Thyroid gland (tissue), 4 donors: ENCODE measurements at regions of chr1 and their contacts with region 1.

Region 1: GRCh38 chr1:112881742-112882127 is 74.3 kb downstream of the SLC16A1 start:
- DNase-seq: no peak
- H3K4me3 ChIP-seq: no peak overlapping the region
- H3K27ac ChIP-seq: no peak overlapping the region
- H3K4me1 ChIP-seq: no peaks in the 10 kb centered on the region
- H3K27me3 ChIP-seq: no peaks in the 10 kb centered on the region
- CTCF ChIP-seq: no peak
- POLR2A ChIP-seq: no peak

Region 2: DNA sequence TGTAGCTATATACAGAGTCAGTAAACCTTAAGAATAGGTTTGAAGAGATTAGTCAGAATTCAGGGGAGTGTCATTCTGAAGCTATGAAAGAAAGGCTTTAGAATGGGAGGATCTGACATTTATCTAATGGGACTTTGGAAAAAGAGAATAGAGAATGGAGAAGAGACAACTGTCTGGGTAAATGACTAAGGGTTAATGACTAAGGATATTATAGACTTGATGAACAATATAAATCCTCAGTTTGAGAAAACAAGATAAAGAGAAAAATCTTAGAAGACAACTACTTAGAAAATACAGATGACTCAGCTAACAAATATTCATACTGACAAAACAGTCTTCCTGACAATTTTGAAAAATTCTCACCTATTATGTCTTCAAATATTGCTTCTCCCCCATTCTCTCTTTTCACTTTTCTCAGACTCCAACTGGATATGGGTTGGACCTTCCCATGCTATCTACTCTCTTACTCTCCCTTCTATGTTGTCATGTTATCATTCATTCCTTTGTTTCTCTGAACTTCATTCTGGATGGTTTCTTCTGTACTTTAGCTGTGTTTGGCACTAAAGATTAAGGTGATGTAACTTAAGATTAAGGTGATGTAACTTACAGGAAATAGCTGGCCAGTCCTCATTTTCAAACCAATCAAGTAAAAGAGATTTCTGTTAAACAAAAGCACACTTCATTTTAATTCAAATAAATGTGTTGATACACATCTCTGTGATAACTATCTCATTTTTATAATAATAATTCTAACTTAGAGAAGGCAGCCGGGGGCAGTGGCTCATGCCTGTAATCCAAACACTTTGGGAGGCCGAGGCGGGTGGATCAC is 53.9 kb after region 1 on chr1:
- intact Hi-C with region 1: no loop called
- DNase-seq: no peak
- H3K4me3 ChIP-seq: no peak overlapping the region
- H3K27ac ChIP-seq: no peak overlapping the region
- H3K4me1 ChIP-seq: no peaks in the 10 kb centered on the region
- H3K27me3 ChIP-seq: no peaks in the 10 kb centered on the region
- CTCF ChIP-seq: no peak
- POLR2A ChIP-seq: no peak

Region 3: GRCh38 chr1:113042285-113043143 is 160.8 kb after region 1 on chr1:
- intact Hi-C with region 1: loop called (anchors 2 kb)
- DNase-seq: peak; percentile 46 to 57
- H3K4me3 ChIP-seq: no peak overlapping the region
- H3K27ac ChIP-seq: no peak overlapping the region
- H3K4me1 ChIP-seq: peaks cover 0 to 8% of the 10 kb centered on the region in 2 donors
- H3K27me3 ChIP-seq: no peaks in the 10 kb centered on the region
- CTCF ChIP-seq: peak in 4 of 6 experiments; percentile 38 to 62 (median 60)
- POLR2A ChIP-seq: no peak